Colonic mucosa (tissue), 4 donors: ENCODE measurements at regions of chr6 and their contacts with region 1.

Region 1: GRCh38 chr6:76861403-76861802 is 601.9 kb downstream of the HTR1B start:
- DNase-seq: no peak
- H3K4me3 ChIP-seq: no peak overlapping the region
- H3K27ac ChIP-seq: no peak overlapping the region
- H3K4me1 ChIP-seq: no peaks in the 10 kb centered on the region
- H3K27me3 ChIP-seq: no peaks in the 10 kb centered on the region
- CTCF ChIP-seq: peak; percentile 26

Region 2: GRCh38 chr6:76684875-76685274 is 176.5 kb before region 1 on chr6:
- intact Hi-C with region 1: loop called (anchors 5 kb)
- DNase-seq: no peak
- H3K4me3 ChIP-seq: no peak overlapping the region
- H3K27ac ChIP-seq: no peak overlapping the region
- H3K4me1 ChIP-seq: no peaks in the 10 kb centered on the region
- H3K27me3 ChIP-seq: no peaks in the 10 kb centered on the region
- CTCF ChIP-seq: no peak

Region 3: DNA sequence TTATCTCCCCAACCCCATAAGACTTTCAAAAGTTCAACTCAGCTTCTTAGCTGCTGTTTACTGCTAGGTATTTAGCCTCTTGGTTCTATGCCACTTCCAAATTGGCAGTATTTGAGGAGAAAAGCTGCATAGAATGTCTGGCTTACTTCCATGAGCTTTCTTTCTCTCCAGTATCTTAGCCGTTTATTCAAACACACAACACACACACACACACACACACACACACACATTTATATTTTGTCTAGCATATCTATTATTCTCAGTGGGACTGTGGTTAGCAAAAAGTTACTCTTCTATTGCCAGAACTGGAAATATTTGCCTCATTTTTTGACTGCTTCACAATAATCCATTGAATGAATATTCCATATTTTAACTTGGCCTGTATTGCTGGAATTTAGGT is 154.8 kb before region 1 on chr6:
- intact Hi-C with region 1: loop called (anchors 5 kb)
- DNase-seq: no peak
- H3K4me3 ChIP-seq: no peak overlapping the region
- H3K27ac ChIP-seq: no peak overlapping the region
- H3K4me1 ChIP-seq: no peaks in the 10 kb centered on the region
- H3K27me3 ChIP-seq: no peaks in the 10 kb centered on the region
- CTCF ChIP-seq: no peak

Region 4: DNA sequence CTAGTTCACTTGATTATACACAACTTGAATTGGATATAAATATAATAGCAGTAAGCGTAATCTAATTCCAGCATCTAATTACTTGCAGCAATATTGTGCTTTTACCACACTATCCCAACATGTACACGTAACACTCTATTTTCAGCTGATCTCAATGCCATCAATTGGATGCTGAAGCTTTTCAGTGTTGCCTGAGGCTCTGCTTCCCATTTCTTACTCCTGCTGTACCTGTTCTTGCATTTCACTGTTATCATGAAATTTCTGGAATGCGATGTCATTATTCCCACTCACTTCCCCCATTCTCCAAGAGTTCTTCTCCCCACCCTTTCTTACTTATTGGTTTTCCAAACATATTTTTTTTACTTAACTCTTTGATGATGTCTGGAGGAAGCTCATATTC is 136.6 kb before region 1 on chr6:
- intact Hi-C with region 1: no loop called
- DNase-seq: no peak
- H3K4me3 ChIP-seq: no peak overlapping the region
- H3K27ac ChIP-seq: no peak overlapping the region
- H3K4me1 ChIP-seq: no peaks in the 10 kb centered on the region
- H3K27me3 ChIP-seq: no peaks in the 10 kb centered on the region
- CTCF ChIP-seq: no peak

Region 5: GRCh38 chr6:76768556-76768955 is 92.8 kb before region 1 on chr6:
- intact Hi-C with region 1: no loop called
- DNase-seq: no peak
- H3K4me3 ChIP-seq: no peak overlapping the region
- H3K27ac ChIP-seq: no peak overlapping the region
- H3K4me1 ChIP-seq: no peaks in the 10 kb centered on the region
- H3K27me3 ChIP-seq: no peaks in the 10 kb centered on the region
- CTCF ChIP-seq: no peak